Caco-2 (cell line): ENCODE measurements at regions of chr7 and their contacts with region 1.

Region 1: GRCh38 chr7:12643644-12644043 is 43.8 kb upstream of the ARL4A start:
- DNase-seq: no peak
- H3K4me3 ChIP-seq: no peak overlapping the region
- H3K4me3 Mint-ChIP-seq: no peak overlapping the region
- H3K27ac Mint-ChIP-seq: no peak overlapping the region
- H3K4me1 ChIP-seq: peaks cover 23% of the 10 kb centered on the region
- H3K4me1 Mint-ChIP-seq: peaks cover 8% of the 10 kb centered on the region
- H3K27me3 ChIP-seq: no peaks in the 10 kb centered on the region
- H3K27me3 Mint-ChIP-seq: no peaks in the 10 kb centered on the region
- CTCF ChIP-seq: no peak

Region 2: GRCh38 chr7:12436896-12437535 is 206.6 kb before region 1 on chr7:
- CTCF ChIA-PET with region 1: no interaction called
- POLR2A ChIA-PET with region 1: no interaction called
- intact Hi-C with region 1: no loop called
- DNase-seq: peak in 1 of 2 experiments; percentile 12
- H3K4me3 ChIP-seq: no peak overlapping the region
- H3K4me3 Mint-ChIP-seq: no peak overlapping the region
- H3K27ac Mint-ChIP-seq: no peak overlapping the region
- H3K4me1 ChIP-seq: no peaks in the 10 kb centered on the region
- H3K4me1 Mint-ChIP-seq: no peaks in the 10 kb centered on the region
- H3K27me3 ChIP-seq: no peaks in the 10 kb centered on the region
- H3K27me3 Mint-ChIP-seq: peaks cover 8% of the 10 kb centered on the region
- CTCF ChIP-seq: peak; percentile 12 to 24

Region 3: GRCh38 chr7:12674849-12675248 is 31.2 kb after region 1 on chr7:
- CTCF ChIA-PET with region 1: no interaction called
- POLR2A ChIA-PET with region 1: no interaction called
- intact Hi-C with region 1: loop called (anchors 1 kb)
- DNase-seq: peak; percentile 49 to 72
- H3K4me3 ChIP-seq: no peak overlapping the region
- H3K4me3 Mint-ChIP-seq: no peak overlapping the region
- H3K27ac Mint-ChIP-seq: no peak overlapping the region
- H3K4me1 ChIP-seq: no peaks in the 10 kb centered on the region; the same call in 1 of the 2 replicates
- H3K4me1 Mint-ChIP-seq: peaks cover 19% of the 10 kb centered on the region
- H3K27me3 ChIP-seq: no peaks in the 10 kb centered on the region
- H3K27me3 Mint-ChIP-seq: no peaks in the 10 kb centered on the region
- CTCF ChIP-seq: peak; percentile 44 to 59

Region 4: GRCh38 chr7:13179102-13179501 is 535.5 kb after region 1 on chr7:
- CTCF ChIA-PET with region 1: no interaction called
- POLR2A ChIA-PET with region 1: no interaction called
- intact Hi-C with region 1: loop called (anchors 5 kb)
- DNase-seq: peak in 1 of 2 experiments; percentile 18
- H3K4me3 ChIP-seq: no peak overlapping the region
- H3K4me3 Mint-ChIP-seq: no peak overlapping the region
- H3K27ac Mint-ChIP-seq: no peak overlapping the region
- H3K4me1 ChIP-seq: peaks cover 19% of the 10 kb centered on the region
- H3K4me1 Mint-ChIP-seq: peaks cover 14% of the 10 kb centered on the region
- H3K27me3 ChIP-seq: no peaks in the 10 kb centered on the region
- H3K27me3 Mint-ChIP-seq: no peaks in the 10 kb centered on the region
- CTCF ChIP-seq: no peak

Region 5: DNA sequence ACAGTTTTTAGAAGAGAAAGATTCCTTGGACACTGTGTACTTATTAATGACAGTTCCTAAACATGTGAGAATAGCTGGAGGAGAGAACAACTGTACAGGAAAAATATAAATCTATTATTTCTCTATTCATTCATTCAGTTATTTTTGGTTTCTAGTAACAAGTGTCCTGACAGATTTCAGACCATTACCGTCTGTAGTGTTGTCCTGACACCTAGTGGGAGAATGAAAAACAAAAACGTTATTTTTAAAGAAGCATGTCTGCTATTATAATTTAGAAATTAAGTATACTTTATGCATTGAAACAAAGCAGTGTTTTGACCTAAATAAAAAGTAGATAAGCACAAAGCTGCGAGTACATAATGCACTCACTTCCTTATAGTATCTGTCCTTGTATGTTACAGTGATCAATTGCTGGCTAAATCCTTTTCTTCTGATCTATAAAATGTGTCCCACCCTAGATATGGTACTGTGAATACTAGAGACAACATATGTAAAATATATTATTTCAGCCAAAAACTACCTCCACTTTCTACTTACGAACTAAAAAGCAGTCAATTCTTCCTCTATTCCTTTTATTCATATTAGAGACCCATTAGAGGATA is 619.4 kb after region 1 on chr7:
- CTCF ChIA-PET with region 1: no interaction called
- POLR2A ChIA-PET with region 1: no interaction called
- intact Hi-C with region 1: loop called (anchors 1 kb)
- DNase-seq: peak in 1 of 2 experiments; percentile 40
- H3K4me3 ChIP-seq: no peak overlapping the region
- H3K4me3 Mint-ChIP-seq: no peak overlapping the region
- H3K27ac Mint-ChIP-seq: no peak overlapping the region
- H3K4me1 ChIP-seq: no peaks in the 10 kb centered on the region
- H3K4me1 Mint-ChIP-seq: no peaks in the 10 kb centered on the region
- H3K27me3 ChIP-seq: no peaks in the 10 kb centered on the region
- H3K27me3 Mint-ChIP-seq: no peaks in the 10 kb centered on the region
- CTCF ChIP-seq: peak; percentile 43 to 54